ENCODE measurements at regions of chrX and their contacts with region 1.

Region 1: GRCh38 chrX:55057675-55058249 is 17.1 kb upstream of the PAGE2B start:
- DNase-seq: peak in 9 of 14 experiments; percentile 9 to 69 (median 25)
- ATAC-seq: peak; percentile 59
- H3K4me3 ChIP-seq: peak overlapping the region; percentile 30
- H3K4me3 Mint-ChIP-seq: peak overlapping the region; percentile 84
- H3K27ac ChIP-seq: no peak overlapping the region
- H3K27ac Mint-ChIP-seq: peak overlapping the region; percentile 88
- H3K4me1 ChIP-seq: peaks cover 11% of the 10 kb centered on the region
- H3K4me1 Mint-ChIP-seq: peaks cover 24% of the 10 kb centered on the region
- H3K27me3 ChIP-seq: no peaks in the 10 kb centered on the region
- H3K27me3 Mint-ChIP-seq: no peaks in the 10 kb centered on the region
- CTCF ChIP-seq: peak; percentile 82

Region 2: GRCh38 chrX:53317365-53318069 is 1740.2 kb before region 1 on chrX:
- CTCF ChIA-PET with region 1: no interaction called
- POLR2A ChIA-PET with region 1: no interaction called
- intact Hi-C with region 1: loop called in 1 of 2 experiments (anchors 10 kb)
- DNase-seq: peak; percentile 49 to 80 (median 64)
- ATAC-seq: peak; percentile 81
- H3K4me3 ChIP-seq: no peak overlapping the region
- H3K4me3 Mint-ChIP-seq: peak overlapping the region; percentile 78
- H3K27ac ChIP-seq: no peak overlapping the region
- H3K27ac Mint-ChIP-seq: no peak overlapping the region
- H3K4me1 ChIP-seq: peaks cover 31% of the 10 kb centered on the region
- H3K4me1 Mint-ChIP-seq: peaks cover 13% of the 10 kb centered on the region
- H3K27me3 ChIP-seq: peaks cover 32 to 46% of the 10 kb centered on the region in 2 experiments
- H3K27me3 Mint-ChIP-seq: peaks cover 44% of the 10 kb centered on the region
- CTCF ChIP-seq: peak; percentile 65

Region 3: DNA sequence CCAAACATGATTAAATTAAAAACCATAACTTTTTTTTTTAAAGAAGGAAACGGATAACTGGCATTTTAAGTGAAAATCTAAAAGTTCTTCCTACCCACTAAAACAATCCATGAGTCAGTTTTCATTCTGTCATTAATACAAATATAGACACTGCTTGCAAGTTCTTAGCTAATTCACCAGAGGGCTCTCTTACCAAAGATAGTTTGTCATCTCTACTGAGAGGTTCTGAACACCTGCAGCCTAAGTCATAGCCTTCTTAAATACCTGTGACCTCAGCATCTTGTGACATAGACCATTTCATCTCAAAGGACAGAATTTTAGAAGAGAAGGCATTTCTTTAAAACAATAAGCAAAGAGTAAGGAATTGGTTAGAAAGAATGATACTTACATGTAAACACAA is 809.5 kb before region 1 on chrX:
- CTCF ChIA-PET with region 1: no interaction called
- POLR2A ChIA-PET with region 1: no interaction called
- intact Hi-C with region 1: loop called in 1 of 2 experiments (anchors 10 kb)
- DNase-seq: peak in 3 of 14 experiments; percentile 8 to 14 (median 13)
- ATAC-seq: peak; percentile 29
- H3K4me3 ChIP-seq: no peak overlapping the region
- H3K4me3 Mint-ChIP-seq: no peak overlapping the region
- H3K27ac ChIP-seq: no peak overlapping the region
- H3K27ac Mint-ChIP-seq: no peak overlapping the region
- H3K4me1 ChIP-seq: no peaks in the 10 kb centered on the region
- H3K4me1 Mint-ChIP-seq: no peaks in the 10 kb centered on the region
- H3K27me3 ChIP-seq: no peaks in the 10 kb centered on the region
- H3K27me3 Mint-ChIP-seq: no peaks in the 10 kb centered on the region
- CTCF ChIP-seq: no peak

Region 4: DNA sequence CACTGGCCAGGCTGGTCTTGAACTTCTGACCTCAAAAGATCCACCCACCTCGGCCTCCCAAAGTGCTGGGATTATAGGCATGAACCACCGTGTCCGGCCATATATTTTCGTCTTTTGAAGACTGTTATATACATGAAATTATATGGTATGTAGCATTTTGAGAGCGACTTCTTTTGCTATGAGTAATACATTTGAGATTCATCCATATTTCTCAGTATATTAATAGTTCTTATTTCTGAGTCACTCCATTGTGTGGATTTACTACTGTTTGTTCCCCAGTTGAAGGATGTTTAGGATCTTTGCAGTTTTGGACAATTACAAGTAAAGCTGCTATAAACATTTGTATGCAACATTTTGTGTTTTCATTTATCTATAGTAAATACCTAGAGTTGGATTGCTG is 492.8 kb before region 1 on chrX:
- CTCF ChIA-PET with region 1: no interaction called
- POLR2A ChIA-PET with region 1: no interaction called
- intact Hi-C with region 1: no loop called
- DNase-seq: no peak
- ATAC-seq: no peak
- H3K4me3 ChIP-seq: no peak overlapping the region
- H3K4me3 Mint-ChIP-seq: no peak overlapping the region
- H3K27ac ChIP-seq: no peak overlapping the region
- H3K27ac Mint-ChIP-seq: no peak overlapping the region
- H3K4me1 ChIP-seq: no peaks in the 10 kb centered on the region
- H3K4me1 Mint-ChIP-seq: no peaks in the 10 kb centered on the region
- H3K27me3 ChIP-seq: no peaks in the 10 kb centered on the region
- H3K27me3 Mint-ChIP-seq: no peaks in the 10 kb centered on the region
- CTCF ChIP-seq: no peak

Region 5: DNA sequence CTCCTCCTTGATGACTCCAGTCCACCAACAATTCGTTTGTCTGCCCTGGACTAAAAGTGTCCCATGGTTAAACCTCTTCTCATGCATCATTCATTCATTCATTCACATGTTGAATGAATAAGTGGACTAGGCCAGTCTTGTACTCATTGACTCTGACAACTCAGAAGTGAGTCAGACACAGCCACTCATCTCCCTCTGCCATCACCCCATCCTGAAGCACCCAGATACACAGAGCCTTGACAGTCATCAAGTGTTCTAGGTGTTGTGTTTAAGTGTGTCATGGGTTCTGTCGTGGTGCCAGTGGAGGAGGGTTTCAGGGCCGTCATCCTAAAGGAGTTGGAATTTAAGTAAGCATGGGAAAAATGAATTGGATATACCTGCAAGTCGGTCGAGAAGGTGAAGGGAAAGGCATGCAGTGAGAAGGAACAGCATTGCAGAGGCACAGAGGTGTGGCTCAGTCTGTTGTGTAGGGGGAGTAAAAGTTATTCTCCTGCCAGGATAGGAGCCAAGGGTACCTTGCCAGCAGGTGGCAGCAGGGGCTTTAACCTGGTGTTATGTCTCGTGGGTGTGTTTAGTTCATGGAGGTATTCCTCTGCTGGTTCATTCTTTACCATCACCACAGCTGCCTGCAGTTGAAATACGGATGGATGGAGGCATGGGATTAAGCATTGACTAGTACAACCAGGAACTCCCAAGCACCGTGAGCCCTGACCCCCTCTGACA is 231.9 kb before region 1 on chrX:
- CTCF ChIA-PET with region 1: no interaction called
- POLR2A ChIA-PET with region 1: no interaction called
- intact Hi-C with region 1: loop called (anchors 5 kb)
- DNase-seq: peak in 12 of 14 experiments; percentile 16 to 47 (median 34)
- ATAC-seq: peak; percentile 71
- H3K4me3 ChIP-seq: no peak overlapping the region
- H3K4me3 Mint-ChIP-seq: no peak overlapping the region
- H3K27ac ChIP-seq: no peak overlapping the region
- H3K27ac Mint-ChIP-seq: no peak overlapping the region
- H3K4me1 ChIP-seq: no peaks in the 10 kb centered on the region
- H3K4me1 Mint-ChIP-seq: no peaks in the 10 kb centered on the region
- H3K27me3 ChIP-seq: no peaks in the 10 kb centered on the region
- H3K27me3 Mint-ChIP-seq: no peaks in the 10 kb centered on the region
- CTCF ChIP-seq: peak; percentile 30

Region 6: GRCh38 chrX:54999717-55000598 is 57.8 kb before region 1 on chrX and contains the start of gene APEX2:
- CTCF ChIA-PET with region 1: interaction called, 3 read pairs
- POLR2A ChIA-PET with region 1: interaction called, 5 read pairs
- intact Hi-C with region 1: loop called in 1 of 2 experiments (anchors 5 kb)
- DNase-seq: peak; percentile 72 to 95 (median 84)
- ATAC-seq: peak; percentile 94
- H3K4me3 ChIP-seq: peak within 1 kb of the TSS; percentile 89
- H3K4me3 Mint-ChIP-seq: peak within 1 kb of the TSS; percentile 96
- H3K27ac ChIP-seq: peak within 1 kb of the TSS; percentile 84 to 97
- H3K27ac Mint-ChIP-seq: peak within 1 kb of the TSS; percentile 97
- H3K4me1 ChIP-seq: peaks cover 20% of the 10 kb centered on the region
- H3K4me1 Mint-ChIP-seq: peaks cover 36% of the 10 kb centered on the region
- H3K27me3 ChIP-seq: no peaks in the 10 kb centered on the region
- H3K27me3 Mint-ChIP-seq: no peaks in the 10 kb centered on the region
- CTCF ChIP-seq: no peak
- total RNA-seq, gene APEX2: 6.4 to 7.2 TPM